Calu3 (cell line): ENCODE measurements at regions of chr3 and their contacts with region 1.

Region 1: GRCh38 chr3:126475413-126476114 is at the start of gene ZXDC:
- DNase-seq: peak; percentile 99
- H3K4me3 Mint-ChIP-seq: peak within 1 kb of the TSS; percentile 76
- H3K27ac Mint-ChIP-seq: peak within 1 kb of the TSS; percentile 84
- H3K4me1 Mint-ChIP-seq: peaks cover 35% of the 10 kb centered on the region
- H3K27me3 Mint-ChIP-seq: peaks cover 7% of the 10 kb centered on the region
- CTCF ChIP-seq: peak; percentile 46
- total RNA-seq, gene ZXDC: 62.3 and 63.8 TPM in 2 replicates

Region 2: DNA sequence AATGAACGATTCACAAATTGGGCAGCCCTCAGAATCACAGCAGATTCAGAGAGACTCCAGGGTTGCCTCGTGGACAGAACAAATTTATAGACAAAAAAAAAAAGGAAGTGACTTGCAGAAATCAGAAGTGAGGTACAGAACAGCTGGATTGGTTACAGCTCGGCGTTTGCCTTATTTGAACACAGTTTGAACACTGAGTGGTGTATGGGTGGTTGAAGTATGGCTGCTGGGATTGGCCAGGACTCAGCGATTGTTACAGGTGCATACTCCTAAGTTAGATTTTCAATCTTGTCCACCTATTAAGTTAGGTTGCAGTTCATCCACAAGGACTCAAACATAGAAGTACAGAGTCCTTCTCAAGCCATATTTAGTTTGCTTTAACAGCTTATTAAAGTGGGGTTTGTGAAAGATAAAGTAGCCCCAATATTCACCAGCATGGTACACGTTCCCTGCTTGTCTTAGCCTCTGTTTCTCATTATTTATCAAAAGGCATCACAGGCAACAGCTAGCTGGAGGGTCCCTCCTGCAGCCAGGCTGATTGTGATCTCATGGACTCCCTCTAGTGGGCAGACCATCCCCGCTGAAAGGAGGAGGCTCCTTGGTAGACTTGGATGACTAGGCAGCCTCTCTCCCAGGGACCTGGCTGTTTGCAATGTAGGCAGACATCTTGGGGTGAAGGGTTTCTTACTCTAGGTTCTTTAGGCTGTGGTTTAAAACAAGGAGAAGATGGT is 277.5 kb before region 1 on chr3:
- CTCF ChIA-PET with region 1: no interaction called
- intact Hi-C with region 1: no loop called
- DNase-seq: peak; percentile 89
- H3K4me3 Mint-ChIP-seq: no peak overlapping the region
- H3K27ac Mint-ChIP-seq: no peak overlapping the region
- H3K4me1 Mint-ChIP-seq: peaks cover 15% of the 10 kb centered on the region
- H3K27me3 Mint-ChIP-seq: no peaks in the 10 kb centered on the region
- CTCF ChIP-seq: peak; percentile 80

Region 3: GRCh38 chr3:126270145-126270811 is 205.3 kb before region 1 on chr3:
- CTCF ChIA-PET with region 1: no interaction called
- intact Hi-C with region 1: loop called (anchors 10 kb)
- DNase-seq: peak; percentile 62
- H3K4me3 Mint-ChIP-seq: no peak overlapping the region
- H3K27ac Mint-ChIP-seq: no peak overlapping the region
- H3K4me1 Mint-ChIP-seq: peaks cover 31% of the 10 kb centered on the region
- H3K27me3 Mint-ChIP-seq: peaks cover 23% of the 10 kb centered on the region
- CTCF ChIP-seq: no peak

Region 4: GRCh38 chr3:126394575-126395228 is 80.9 kb before region 1 on chr3 and contains the start of gene CFAP100:
- CTCF ChIA-PET with region 1: interaction called, 6 read pairs
- intact Hi-C with region 1: loop called (anchors 5 kb)
- DNase-seq: no peak
- H3K4me3 Mint-ChIP-seq: no peak within 1 kb of the TSS
- H3K27ac Mint-ChIP-seq: no peak within 1 kb of the TSS
- H3K4me1 Mint-ChIP-seq: peaks cover 23% of the 10 kb centered on the region
- H3K27me3 Mint-ChIP-seq: peaks cover 55% of the 10 kb centered on the region
- CTCF ChIP-seq: no peak
- total RNA-seq, gene CFAP100: not detected in 2 replicates